Panc1 (cell line): ENCODE measurements at regions of chr22 and their contacts with region 1.

Region 1: DNA sequence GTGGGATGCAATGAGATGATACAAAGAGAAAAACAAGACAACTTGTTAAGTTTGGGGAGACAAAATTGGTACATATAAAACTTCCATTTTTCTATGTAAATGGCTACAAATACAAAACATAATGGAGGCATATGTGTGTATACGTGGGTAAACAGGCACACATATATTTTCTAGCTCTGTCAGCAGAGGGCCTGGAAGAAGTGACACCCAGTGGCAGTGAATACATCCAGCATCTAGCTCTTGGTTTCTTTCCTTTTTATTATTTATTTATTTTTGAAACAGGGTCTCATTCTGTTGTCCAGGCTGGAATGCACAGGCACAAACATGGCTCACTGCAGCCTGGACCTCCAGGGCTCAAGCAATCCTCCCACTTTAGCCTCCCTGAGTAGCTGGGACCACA is 5.0 kb upstream of the RASL10A start:
- DNase-seq: no peak
- ATAC-seq: peak; percentile 64; the same call in 1 of the 2 replicates
- H3K4me3 ChIP-seq: no peak overlapping the region
- H3K27ac ChIP-seq: no peak overlapping the region
- H3K4me1 ChIP-seq: no peaks in the 10 kb centered on the region
- H3K27me3 ChIP-seq: no peaks in the 10 kb centered on the region
- CTCF ChIP-seq: peak; percentile 44

Region 2: GRCh38 chr22:29388759-29389090 is 68.2 kb after region 1 on chr22:
- CTCF ChIA-PET with region 1: no interaction called
- POLR2A ChIA-PET with region 1: interaction called, 10 read pairs
- in situ Hi-C with region 1: no loop called
- intact Hi-C with region 1: no loop called
- DNase-seq: no peak
- ATAC-seq: peak; percentile 28
- H3K4me3 ChIP-seq: peak overlapping the region; percentile 78 to 90
- H3K27ac ChIP-seq: peak overlapping the region; percentile 86
- H3K4me1 ChIP-seq: peaks cover 12% of the 10 kb centered on the region
- H3K27me3 ChIP-seq: no peaks in the 10 kb centered on the region
- CTCF ChIP-seq: no peak